Gastrocnemius medialis (tissue), 4 donors: ENCODE measurements at regions of chr19 and their contacts with region 1.

Region 1: DNA sequence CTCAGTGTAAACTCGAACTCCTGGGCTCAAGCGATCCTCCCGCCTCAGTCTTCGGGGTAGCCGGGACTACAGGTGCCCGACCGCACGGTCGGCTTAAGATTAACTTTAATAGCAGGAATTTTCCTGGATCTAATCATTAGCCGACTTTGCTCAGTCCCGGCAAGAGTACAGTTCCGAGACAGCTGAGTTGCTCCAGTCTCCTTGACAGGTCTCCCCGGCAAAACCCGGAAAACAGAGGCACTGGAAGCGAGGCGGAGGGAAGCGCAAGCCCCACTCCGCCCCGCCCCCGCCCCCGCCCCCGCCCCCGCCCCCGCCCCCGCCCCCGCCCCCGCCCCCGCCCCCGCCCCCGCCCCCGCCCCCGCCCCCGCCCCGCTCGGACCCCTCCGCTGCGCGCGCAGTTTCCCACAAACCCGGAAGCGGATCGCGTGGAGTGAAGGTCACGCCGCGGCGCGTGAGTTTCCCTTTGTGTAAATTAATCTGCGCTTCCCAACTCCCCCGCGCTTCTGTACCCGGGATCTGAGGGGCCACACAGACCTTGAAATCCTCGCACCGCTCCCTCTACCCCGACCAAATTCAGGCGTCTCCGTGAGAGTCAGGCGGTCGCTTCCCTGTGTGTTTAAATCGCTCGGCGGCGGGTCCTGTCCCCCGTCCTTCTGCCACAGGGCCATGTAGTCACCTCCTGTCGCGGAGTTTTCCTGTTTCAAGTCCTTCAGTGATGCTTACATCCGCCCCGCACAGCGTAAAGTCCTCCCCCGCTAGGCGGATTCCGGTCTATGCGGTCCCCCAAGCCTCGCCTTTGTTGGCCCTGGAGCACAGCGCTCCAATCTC is at the start of gene ZNF480:
- DNase-seq: peak; percentile 58 to 70
- ATAC-seq: peak; percentile 93 to 94
- H3K4me3 ChIP-seq: peak within 1 kb of the TSS; percentile 81 to 94 (median 86)
- H3K27ac ChIP-seq: peak within 1 kb of the TSS; percentile 90 to 94 (median 92)
- H3K4me1 ChIP-seq: peaks cover 5 to 7% of the 10 kb centered on the region in 2 donors
- H3K27me3 ChIP-seq: no peaks in the 10 kb centered on the region
- CTCF ChIP-seq: peak in 1 of 5 experiments; percentile 13
- POLR2A ChIP-seq: peak; percentile 60 to 73
- total RNA-seq, gene ZNF480: 3.8 to 7.4 (median 6.0) TPM

Region 2: DNA sequence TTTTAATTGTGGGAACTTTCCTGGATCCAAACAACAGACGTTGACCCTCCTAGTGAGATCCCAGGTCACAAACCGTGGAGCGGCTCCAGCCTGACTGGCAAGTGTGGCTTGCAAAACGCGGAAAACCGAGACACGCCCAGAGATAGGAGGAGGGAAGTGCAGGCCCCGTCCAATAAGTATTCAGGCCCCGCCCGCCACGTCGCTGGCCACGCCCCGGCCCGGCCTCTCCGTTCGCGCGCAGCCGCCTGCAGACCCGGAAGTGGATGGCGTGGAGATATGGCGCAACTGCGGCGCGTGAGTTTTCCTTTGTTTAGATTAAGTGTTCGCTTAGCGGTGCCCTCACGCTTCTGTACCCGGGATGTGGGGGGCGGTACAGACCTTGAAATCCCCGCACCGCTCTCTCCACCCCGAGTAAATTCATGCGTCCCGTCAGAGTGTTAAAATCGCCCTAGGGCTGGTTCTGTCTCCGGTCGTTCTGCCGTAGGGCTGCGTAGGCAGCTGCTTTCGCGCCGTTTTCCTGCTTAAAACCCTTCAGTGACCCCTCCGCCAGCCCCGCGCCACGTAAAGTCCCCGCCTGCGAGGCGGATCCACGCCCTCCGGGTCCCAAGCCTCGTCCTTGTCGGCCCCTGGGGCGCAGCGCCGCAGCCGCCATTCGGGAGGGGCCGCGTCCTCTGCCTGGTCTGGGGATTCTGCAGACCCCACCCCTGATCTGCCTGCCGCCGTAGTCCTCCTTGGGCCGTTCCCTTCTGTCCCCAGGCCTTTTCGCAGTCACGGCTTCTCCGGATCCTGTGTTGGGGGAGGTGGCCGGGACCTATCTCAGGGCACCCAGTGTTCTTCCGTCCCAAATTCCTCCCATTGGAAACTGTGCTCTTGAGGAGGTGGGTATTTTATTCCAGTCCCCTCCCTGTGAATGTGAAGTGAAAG is 27.4 kb before region 1 on chr19 and contains the start of gene ZNF766:
- in situ Hi-C with region 1: no loop called
- intact Hi-C with region 1: loop called (anchors 1 kb)
- DNase-seq: peak; percentile 95 to 97
- ATAC-seq: peak; percentile 99
- H3K4me3 ChIP-seq: peak within 1 kb of the TSS; percentile 68 to 97 (median 92)
- H3K27ac ChIP-seq: peak within 1 kb of the TSS; percentile 90 to 98 (median 94)
- H3K4me1 ChIP-seq: peaks cover 9 to 21% of the 10 kb centered on the region in 2 donors
- H3K27me3 ChIP-seq: no peaks in the 10 kb centered on the region
- CTCF ChIP-seq: no peak
- POLR2A ChIP-seq: peak; percentile 83 to 87
- total RNA-seq, gene ZNF766: 6.6 to 11.6 (median 7.7) TPM

Region 3: GRCh38 chr19:52336117-52336790 is 39.3 kb after region 1 on chr19 and contains the start of gene ZNF610:
- in situ Hi-C with region 1: no loop called
- intact Hi-C with region 1: loop called (anchors 1 kb)
- DNase-seq: peak; percentile 70 to 73
- ATAC-seq: peak; percentile 94 to 99
- H3K4me3 ChIP-seq: peak within 1 kb of the TSS; percentile 76 to 95 (median 90)
- H3K27ac ChIP-seq: peak within 1 kb of the TSS; percentile 72 to 81 (median 78)
- H3K4me1 ChIP-seq: peaks cover 6 to 8% of the 10 kb centered on the region in 2 donors
- H3K27me3 ChIP-seq: no peaks in the 10 kb centered on the region
- CTCF ChIP-seq: no peak
- POLR2A ChIP-seq: peak in 1 of 2 donors; percentile 46
- total RNA-seq, gene ZNF610: 0.61 to 0.71 TPM in 2 of 4 donors, not detected in the others

Region 4: DNA sequence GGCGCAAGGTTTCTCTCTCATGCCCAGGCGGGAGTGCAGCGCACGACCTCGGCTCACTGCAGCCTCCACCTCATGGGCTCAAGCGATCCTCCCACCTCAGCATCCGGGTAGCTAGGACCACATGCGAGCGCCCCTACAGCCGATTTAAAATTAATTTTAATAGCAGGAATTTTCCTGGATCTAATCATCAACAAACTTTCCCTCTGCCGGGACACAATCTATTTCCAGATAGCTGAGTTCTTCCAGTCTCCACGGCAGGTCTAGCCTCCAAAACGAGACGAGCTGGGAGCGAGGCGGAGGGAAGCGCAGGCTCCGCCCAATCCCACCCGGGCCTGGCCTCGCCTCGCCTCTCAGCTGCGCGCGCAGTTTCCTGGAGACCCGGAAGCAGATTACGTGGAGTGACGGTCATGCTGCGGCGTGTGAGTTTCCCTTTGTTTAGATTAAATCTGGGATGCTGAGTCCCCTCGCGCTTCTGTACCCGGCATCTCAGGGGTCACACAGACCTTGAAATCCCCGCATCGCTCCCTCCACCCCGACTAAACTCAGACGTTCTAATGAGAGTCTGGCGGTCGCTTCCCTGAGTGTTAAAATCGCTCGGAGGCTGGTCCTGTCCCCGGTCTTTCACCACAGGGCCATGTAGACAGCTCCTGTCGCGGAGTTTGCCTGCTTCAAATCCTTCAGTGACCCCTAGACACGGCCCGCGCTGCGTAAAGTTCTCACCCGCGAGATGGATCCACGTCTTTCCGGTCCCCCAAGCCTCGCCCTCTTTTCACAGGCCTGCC is 72.8 kb after region 1 on chr19 and contains the start of gene ZNF880:
- in situ Hi-C with region 1: no loop called
- intact Hi-C with region 1: loop called (anchors 2 kb)
- DNase-seq: peak; percentile 73 to 82
- ATAC-seq: peak; percentile 95 to 99
- H3K4me3 ChIP-seq: peak within 1 kb of the TSS; percentile 69 to 85 (median 79)
- H3K27ac ChIP-seq: peak within 1 kb of the TSS; percentile 82 to 88 (median 85)
- H3K4me1 ChIP-seq: peaks cover 0 to 6% of the 10 kb centered on the region in 2 donors
- H3K27me3 ChIP-seq: no peaks in the 10 kb centered on the region
- CTCF ChIP-seq: no peak
- POLR2A ChIP-seq: peak in 1 of 2 donors; percentile 39
- total RNA-seq, gene ZNF880: 6.1 to 12.7 (median 7.9) TPM

Region 5: GRCh38 chr19:52444506-52444905 is 147.5 kb after region 1 on chr19:
- in situ Hi-C with region 1: no loop called
- intact Hi-C with region 1: no loop called
- DNase-seq: no peak
- ATAC-seq: no peak
- H3K4me3 ChIP-seq: no peak overlapping the region
- H3K27ac ChIP-seq: no peak overlapping the region
- H3K4me1 ChIP-seq: no peaks in the 10 kb centered on the region
- H3K27me3 ChIP-seq: no peaks in the 10 kb centered on the region
- CTCF ChIP-seq: no peak
- POLR2A ChIP-seq: no peak

Region 6: GRCh38 chr19:52601025-52601973 is 304.3 kb after region 1 on chr19:
- in situ Hi-C with region 1: no loop called
- intact Hi-C with region 1: loop called (anchors 1 kb)
- DNase-seq: peak; percentile 80 to 83
- ATAC-seq: peak; percentile 95 to 96
- H3K4me3 ChIP-seq: peak overlapping the region; percentile 54 to 100 (median 72)
- H3K27ac ChIP-seq: peak overlapping the region; percentile 25 to 66 (median 56)
- H3K4me1 ChIP-seq: peaks cover 10 to 17% of the 10 kb centered on the region in 2 donors
- H3K27me3 ChIP-seq: peaks cover 0 to 6% (median 0%) of the 10 kb centered on the region in 3 donors
- CTCF ChIP-seq: peak in 4 of 5 experiments; percentile 12 to 59 (median 38)
- POLR2A ChIP-seq: no peak